ENCODE measurements at regions of chr1 and their contacts with region 1.

Region 1: GRCh38 chr1:53196485-53197270 is at the start of gene CPT2:
- DNase-seq: peak; percentile 92
- H3K4me3 ChIP-seq: peak within 1 kb of the TSS; percentile 93 to 98
- H3K27ac ChIP-seq: peak within 1 kb of the TSS; percentile 93
- H3K4me1 ChIP-seq: peaks cover 10% of the 10 kb centered on the region
- H3K27me3 ChIP-seq: no peaks in the 10 kb centered on the region
- CTCF ChIP-seq: peak in 2 of 4 experiments; percentile 23 to 48
- POLR2A ChIP-seq: peak; percentile 95
- total RNA-seq, gene CPT2: 30.6 to 48.1 TPM

Region 2: GRCh38 chr1:52726265-52727113 is 470.2 kb before region 1 on chr1 and contains the start of gene ZYG11B:
- intact Hi-C with region 1: loop called (anchors 10 kb)
- DNase-seq: peak; percentile 86
- H3K4me3 ChIP-seq: peak within 1 kb of the TSS; percentile 78 to 87
- H3K27ac ChIP-seq: peak within 1 kb of the TSS; percentile 80 to 83
- H3K4me1 ChIP-seq: no peaks in the 10 kb centered on the region
- H3K27me3 ChIP-seq: no peaks in the 10 kb centered on the region
- CTCF ChIP-seq: peak in 2 of 4 experiments; percentile 20 to 31
- POLR2A ChIP-seq: peak; percentile 75
- total RNA-seq, gene ZYG11B: 38.6 to 65.5 TPM

Region 3: DNA sequence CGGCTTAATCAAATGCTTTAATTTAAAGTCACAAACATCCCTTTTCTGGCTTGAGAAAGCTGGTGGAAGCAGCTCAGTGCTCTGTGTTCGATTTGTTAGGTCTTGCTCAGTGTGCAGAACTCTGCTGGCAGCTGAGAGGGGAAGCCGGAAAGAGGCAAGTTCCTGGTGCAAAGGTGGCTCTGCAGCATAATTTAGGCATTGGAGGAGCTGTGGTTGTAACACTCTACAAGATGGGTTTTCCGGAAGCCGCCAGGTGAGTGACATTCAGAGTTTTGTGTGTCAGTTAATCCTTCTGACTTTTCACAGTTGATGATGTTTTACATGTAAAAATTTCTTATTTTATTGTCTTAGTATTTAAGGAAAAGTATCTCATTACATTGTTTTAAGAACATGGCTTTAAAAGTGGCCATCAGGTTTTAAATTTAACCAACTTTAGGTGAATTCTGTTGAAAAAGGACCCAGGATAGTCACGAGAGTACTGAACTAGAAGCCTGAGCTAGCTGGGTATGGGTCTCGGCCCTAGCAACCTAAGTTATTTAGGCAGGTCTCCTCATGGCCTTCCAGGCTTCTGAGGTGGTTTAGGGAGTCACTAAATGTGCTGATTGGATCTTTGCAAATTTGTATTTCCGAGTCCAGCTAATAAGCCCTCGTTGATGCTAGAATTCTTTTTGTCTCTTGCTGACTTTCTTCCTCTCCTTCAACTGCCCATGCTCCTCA is 181.7 kb before region 1 on chr1:
- intact Hi-C with region 1: no loop called
- DNase-seq: peak; percentile 75
- H3K4me3 ChIP-seq: peak overlapping the region; percentile 38 to 40
- H3K27ac ChIP-seq: peak overlapping the region; percentile 38 to 54
- H3K4me1 ChIP-seq: no peaks in the 10 kb centered on the region
- H3K27me3 ChIP-seq: no peaks in the 10 kb centered on the region
- CTCF ChIP-seq: no peak
- POLR2A ChIP-seq: no peak

Region 4: GRCh38 chr1:53278201-53278725 is 81.6 kb after region 1 on chr1:
- intact Hi-C with region 1: no loop called
- DNase-seq: peak; percentile 25
- H3K4me3 ChIP-seq: no peak overlapping the region
- H3K27ac ChIP-seq: no peak overlapping the region
- H3K4me1 ChIP-seq: no peaks in the 10 kb centered on the region
- H3K27me3 ChIP-seq: no peaks in the 10 kb centered on the region
- CTCF ChIP-seq: peak; percentile 70 to 91 (median 89)
- POLR2A ChIP-seq: no peak

Measured in prostate gland (tissue), 2 donors.